GM12878 (cell line): ENCODE measurements at regions of chr5 and their contacts with region 1.

Region 1: DNA sequence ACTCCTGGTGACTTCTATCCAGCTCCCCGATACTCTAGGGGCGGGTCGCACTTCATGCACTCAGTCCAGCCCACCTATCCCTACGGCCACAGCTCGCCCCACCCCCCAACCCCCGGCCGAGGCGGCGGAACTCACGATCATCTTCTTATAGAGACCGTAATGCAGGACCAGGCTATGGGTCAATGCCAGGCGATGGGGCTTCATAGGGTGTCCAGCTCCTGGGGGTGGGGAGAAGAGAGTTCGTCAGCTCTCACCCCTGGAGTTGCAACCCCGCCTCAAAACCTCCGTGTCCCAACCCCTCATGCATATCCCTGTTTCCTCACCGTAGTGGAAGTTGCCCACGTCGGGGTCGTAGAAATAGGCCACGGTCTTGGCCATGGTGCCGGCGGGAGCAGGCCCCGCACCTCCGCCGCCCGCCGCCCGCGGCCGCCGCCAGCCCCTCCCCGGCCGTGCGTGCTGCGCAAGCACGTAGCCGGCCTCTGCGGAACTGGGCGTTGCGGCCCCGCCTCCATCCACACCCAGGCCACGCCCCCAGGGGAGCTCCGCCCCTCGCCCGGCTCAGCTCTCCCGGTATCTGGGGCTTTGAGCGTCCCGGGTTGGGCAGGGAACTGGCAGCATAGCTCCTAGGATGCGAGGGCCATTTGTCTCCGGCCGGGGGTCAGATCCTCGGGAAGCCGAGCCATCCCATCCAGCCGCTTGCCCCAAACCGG is at the starts of genes HDAC3 and RELL2:
- DNase-seq: no peak
- ATAC-seq: peak; percentile 86
- H3K4me3 ChIP-seq: peak within 1 kb of the TSS; percentile 85
- H3K27ac ChIP-seq: peak within 1 kb of the TSS; percentile 86
- H3K4me1 ChIP-seq: peaks cover 41% of the 10 kb centered on the region
- H3K27me3 ChIP-seq: no peaks in the 10 kb centered on the region
- CTCF ChIP-seq: no peak
- EP300 ChIP-seq: no peak
- POLR2A ChIP-seq: peak; percentile 72
- RAD21 ChIP-seq: no peak
- polyA plus RNA-seq, gene HDAC3: 62.2 to 108 TPM
- polyA plus RNA-seq, gene RELL2: 0.23 to 0.64 TPM

Region 2: DNA sequence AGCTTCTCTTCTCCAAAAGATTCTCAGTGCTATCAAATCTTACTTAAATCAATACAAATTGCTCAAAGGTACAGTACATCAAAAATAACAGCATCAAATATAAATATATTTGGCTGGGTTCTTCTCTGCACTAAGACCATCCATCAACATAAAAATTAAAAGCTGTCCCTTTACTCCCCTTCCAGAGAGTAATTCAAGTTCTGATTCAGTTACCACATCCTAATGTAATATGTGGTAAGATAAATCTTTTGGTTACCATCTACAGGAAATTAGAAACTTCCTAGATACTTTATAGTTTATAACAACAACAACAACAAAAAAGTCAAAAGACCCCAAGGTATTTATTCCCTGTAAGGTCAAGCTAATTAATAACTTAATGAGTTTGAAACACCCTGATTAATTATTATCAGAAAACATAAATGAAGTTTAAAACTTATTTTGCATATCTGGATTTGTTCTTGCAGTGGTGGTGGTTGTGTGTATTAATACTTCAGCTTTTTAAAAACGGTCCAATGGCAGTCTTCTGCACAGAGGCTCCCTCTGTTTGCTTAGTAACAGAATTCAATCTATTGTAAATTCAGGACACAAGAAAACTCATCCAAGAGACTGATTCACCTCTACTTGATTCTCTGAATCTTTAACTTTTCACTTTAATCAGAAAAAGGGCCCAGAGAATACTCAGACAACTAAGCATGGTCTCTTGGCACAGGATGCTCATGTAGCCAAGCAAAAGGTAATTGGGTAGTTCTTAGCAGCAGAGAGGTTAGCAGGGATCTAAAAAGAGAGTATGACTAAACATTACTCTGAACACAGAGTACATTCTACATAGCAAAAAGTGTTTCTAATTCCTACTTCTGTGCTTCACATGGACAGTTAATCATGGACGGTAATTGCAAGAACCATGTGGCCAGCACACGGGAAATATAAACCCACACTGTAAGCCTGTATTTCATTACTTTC is 37.9 kb before region 1 on chr5:
- CTCF ChIA-PET with region 1: interaction called, 137 read pairs
- POLR2A ChIA-PET with region 1: interaction called, 34 read pairs
- RAD21 ChIA-PET with region 1: interaction called, 124 read pairs
- SMC1A ChIA-PET with region 1: interaction called, 87 read pairs
- in situ Hi-C with region 1: no loop called
- intact Hi-C with region 1: no loop called
- DNase-seq: no peak
- ATAC-seq: peak; percentile 68
- H3K4me3 ChIP-seq: no peak overlapping the region
- H3K27ac ChIP-seq: no peak overlapping the region; the same call in 1 of the 2 replicates
- H3K4me1 ChIP-seq: peaks cover 11% of the 10 kb centered on the region
- H3K27me3 ChIP-seq: no peaks in the 10 kb centered on the region
- CTCF ChIP-seq: no peak
- EP300 ChIP-seq: no peak
- POLR2A ChIP-seq: no peak
- RAD21 ChIP-seq: no peak

Region 3: GRCh38 chr5:141605523-141606277 is 30.9 kb before region 1 on chr5:
- CTCF ChIA-PET with region 1: interaction called, 4 read pairs
- POLR2A ChIA-PET with region 1: interaction called, 22 read pairs
- RAD21 ChIA-PET with region 1: interaction called, 12 read pairs
- SMC1A ChIA-PET with region 1: interaction called, 28 read pairs
- in situ Hi-C with region 1: no loop called
- intact Hi-C with region 1: no loop called
- DNase-seq: peak; percentile 87
- ATAC-seq: peak; percentile 94
- H3K4me3 ChIP-seq: peak overlapping the region; percentile 23
- H3K27ac ChIP-seq: peak overlapping the region; percentile 77
- H3K4me1 ChIP-seq: peaks cover 34% of the 10 kb centered on the region
- H3K27me3 ChIP-seq: no peaks in the 10 kb centered on the region
- CTCF ChIP-seq: no peak
- EP300 ChIP-seq: peak; percentile 58 to 81
- POLR2A ChIP-seq: no peak
- RAD21 ChIP-seq: 0 out of 2 replicates have a peak, but pooled peaks have one; percentile 7

Region 4: DNA sequence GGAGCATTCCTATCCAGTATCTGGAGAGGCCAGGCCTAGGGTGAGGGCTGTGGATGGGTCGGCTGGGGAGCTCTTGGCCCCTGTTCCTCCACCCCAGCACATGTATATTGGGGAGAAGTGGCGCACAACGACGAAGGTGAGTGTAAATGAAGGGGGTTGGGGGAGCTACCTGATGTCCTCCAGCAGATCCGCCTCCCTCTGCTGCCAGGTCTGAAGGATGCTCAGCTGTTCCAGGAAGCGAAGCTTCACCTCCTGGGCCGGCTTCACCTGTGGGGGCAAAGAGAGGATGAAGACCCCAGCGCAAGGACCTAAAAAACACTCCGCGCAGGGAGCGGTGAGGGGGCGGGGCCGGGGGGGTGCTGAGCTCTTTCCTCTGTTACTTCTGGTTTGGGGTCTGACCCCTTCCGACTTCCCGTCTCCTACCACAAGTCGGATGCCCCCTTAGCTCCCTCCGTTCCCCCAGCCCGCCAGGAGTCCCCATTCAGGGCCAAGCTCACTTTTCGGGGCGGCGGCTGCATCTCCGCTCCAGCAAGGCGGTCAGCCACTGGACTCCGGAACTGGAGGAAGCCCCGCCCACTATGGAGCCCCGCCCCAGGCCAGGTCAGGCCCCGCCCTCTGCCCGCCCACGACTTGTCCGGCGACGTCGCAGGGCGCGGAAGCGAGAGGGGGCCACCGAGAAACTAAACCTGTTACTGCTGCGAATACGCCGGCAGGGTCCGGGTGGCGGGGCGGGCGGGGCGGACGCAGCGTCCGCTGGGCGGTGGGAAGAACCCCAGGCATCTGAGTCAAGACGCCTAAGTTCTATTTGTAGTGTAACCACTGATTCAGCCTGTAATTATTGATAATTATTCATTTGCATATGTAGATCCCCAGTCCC is 14.5 kb after region 1 on chr5 and contains the start of gene FCHSD1:
- CTCF ChIA-PET with region 1: interaction called, 13 read pairs
- POLR2A ChIA-PET with region 1: interaction called, 23 read pairs
- RAD21 ChIA-PET with region 1: interaction called, 12 read pairs
- SMC1A ChIA-PET with region 1: interaction called, 12 read pairs
- in situ Hi-C with region 1: no loop called
- intact Hi-C with region 1: no loop called
- DNase-seq: no peak
- ATAC-seq: peak; percentile 99
- H3K4me3 ChIP-seq: peak within 1 kb of the TSS; percentile 85
- H3K27ac ChIP-seq: peak within 1 kb of the TSS; percentile 51
- H3K4me1 ChIP-seq: peaks cover 8% of the 10 kb centered on the region
- H3K27me3 ChIP-seq: no peaks in the 10 kb centered on the region
- CTCF ChIP-seq: no peak
- EP300 ChIP-seq: no peak
- POLR2A ChIP-seq: peak; percentile 80
- RAD21 ChIP-seq: no peak
- polyA plus RNA-seq, gene FCHSD1: 0.97 to 1.0 TPM

Region 5: GRCh38 chr5:141664732-141665461 is 28.3 kb after region 1 on chr5:
- CTCF ChIA-PET with region 1: interaction called, 12 read pairs
- POLR2A ChIA-PET with region 1: interaction called, 3 read pairs
- RAD21 ChIA-PET with region 1: no interaction called
- SMC1A ChIA-PET with region 1: interaction called, 3 read pairs
- in situ Hi-C with region 1: no loop called
- intact Hi-C with region 1: no loop called
- DNase-seq: peak; percentile 31
- ATAC-seq: peak; percentile 100
- H3K4me3 ChIP-seq: no peak overlapping the region
- H3K27ac ChIP-seq: no peak overlapping the region
- H3K4me1 ChIP-seq: no peaks in the 10 kb centered on the region
- H3K27me3 ChIP-seq: no peaks in the 10 kb centered on the region
- CTCF ChIP-seq: peak; percentile 92 to 96 (median 94)
- EP300 ChIP-seq: no peak
- POLR2A ChIP-seq: no peak
- RAD21 ChIP-seq: peak; percentile 84